ENCODE measurements at regions of chr4 and their contacts with region 1.

Region 1: DNA sequence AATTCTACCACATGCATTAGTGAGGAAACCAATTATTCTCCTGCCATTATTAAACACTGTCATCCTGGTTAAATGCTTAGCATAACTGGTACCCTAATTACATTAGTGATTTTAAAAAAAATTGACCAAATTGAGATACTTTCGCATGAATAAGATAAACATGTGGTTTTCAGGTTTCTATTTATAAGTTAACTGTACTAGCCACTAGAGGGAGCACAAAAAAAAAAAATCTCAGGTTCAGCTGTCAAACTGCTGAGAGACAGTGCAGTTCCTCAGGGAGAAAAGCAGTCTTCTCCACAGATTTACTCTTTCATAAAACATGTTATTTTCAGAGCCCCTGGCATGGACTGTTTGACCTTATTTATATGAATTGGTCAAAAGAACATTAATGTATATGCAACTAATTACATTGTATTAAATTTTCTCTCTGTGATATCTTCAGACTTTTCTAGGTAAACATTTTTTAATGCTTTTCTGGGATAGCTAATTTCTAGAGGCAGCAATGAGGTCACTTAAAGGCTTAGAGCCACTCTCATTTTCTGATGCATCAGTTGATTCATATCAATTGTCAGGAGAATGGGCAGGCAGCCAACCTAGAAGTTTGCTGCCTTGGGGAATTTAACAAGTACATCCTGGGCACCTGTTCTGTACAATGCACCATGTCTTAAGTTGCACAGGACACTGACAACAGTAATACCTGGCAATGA is 167.5 kb downstream of the CDS1 start:
- DNase-seq: no peak
- ATAC-seq: peak in 3 of 4 donors; percentile 79 to 87 (median 86)
- H3K4me3 ChIP-seq: no peak overlapping the region
- H3K27ac ChIP-seq: no peak overlapping the region
- H3K4me1 ChIP-seq: no peaks in the 10 kb centered on the region
- H3K27me3 ChIP-seq: no peaks in the 10 kb centered on the region
- CTCF ChIP-seq: peak; percentile 9 to 60 (median 43)

Region 2: GRCh38 chr4:84966383-84967242 is 216.2 kb after region 1 on chr4 and contains the start of gene WDFY3:
- intact Hi-C with region 1: loop called (anchors 5 to 10 kb)
- DNase-seq: peak; percentile 70 to 89 (median 79)
- ATAC-seq: peak; percentile 90 to 94 (median 92)
- H3K4me3 ChIP-seq: peak within 1 kb of the TSS; percentile 77 to 88 (median 82)
- H3K27ac ChIP-seq: peak within 1 kb of the TSS; percentile 76 to 95 (median 86)
- H3K4me1 ChIP-seq: peaks cover 1 to 19% (median 7%) of the 10 kb centered on the region in 3 donors
- H3K27me3 ChIP-seq: no peaks in the 10 kb centered on the region
- CTCF ChIP-seq: no peak
- total RNA-seq, gene WDFY3: 25.3 to 53.0 (median 30.6) TPM

Measured in pancreas (tissue), 10 donors.